ENCODE measurements at regions of chrX and their contacts with region 1.

Region 1: DNA sequence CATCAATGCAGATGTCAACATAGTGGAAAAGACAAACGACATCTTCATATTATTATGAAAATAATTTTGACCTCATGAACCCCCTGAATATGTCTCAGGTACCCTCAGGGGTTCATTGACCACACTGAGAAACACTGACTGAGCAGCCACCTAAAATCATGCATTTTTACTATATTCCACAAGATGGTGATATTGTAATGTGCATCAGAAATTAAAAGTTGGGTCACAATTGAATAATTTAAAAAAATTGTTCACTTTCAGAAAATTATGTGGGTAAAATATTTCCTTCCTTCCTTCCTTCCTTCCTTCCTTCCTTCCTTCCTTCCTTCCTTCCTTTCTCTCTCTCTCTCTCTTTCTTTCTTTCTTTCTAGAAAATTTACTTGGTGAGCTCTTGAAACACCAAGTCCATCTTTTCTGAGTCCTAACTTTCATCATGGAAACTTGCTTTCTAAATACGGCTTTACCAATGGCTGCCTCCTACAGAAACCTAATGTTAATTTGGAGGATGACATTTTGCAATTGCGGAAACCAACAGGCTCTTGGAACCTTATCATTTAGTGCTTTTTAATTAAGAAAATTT is 103.6 kb downstream of the RTL3 start:
- DNase-seq: no peak
- H3K4me3 Mint-ChIP-seq: no peak overlapping the region
- H3K27ac Mint-ChIP-seq: no peak overlapping the region
- H3K4me1 Mint-ChIP-seq: no peaks in the 10 kb centered on the region
- H3K27me3 Mint-ChIP-seq: no peaks in the 10 kb centered on the region
- CTCF ChIP-seq: no peak

Region 2: GRCh38 chrX:78708262-78708661 is 152.8 kb after region 1 on chrX:
- CTCF ChIA-PET with region 1: no interaction called
- intact Hi-C with region 1: loop called (anchors 1 kb)
- DNase-seq: peak; percentile 16
- H3K4me3 Mint-ChIP-seq: no peak overlapping the region
- H3K27ac Mint-ChIP-seq: no peak overlapping the region
- H3K4me1 Mint-ChIP-seq: no peaks in the 10 kb centered on the region
- H3K27me3 Mint-ChIP-seq: no peaks in the 10 kb centered on the region
- CTCF ChIP-seq: no peak

Region 3: GRCh38 chrX:78886550-78886949 is 331.1 kb after region 1 on chrX:
- CTCF ChIA-PET with region 1: no interaction called
- intact Hi-C with region 1: loop called (anchors 1 kb)
- DNase-seq: no peak
- H3K4me3 Mint-ChIP-seq: no peak overlapping the region
- H3K27ac Mint-ChIP-seq: no peak overlapping the region
- H3K4me1 Mint-ChIP-seq: no peaks in the 10 kb centered on the region
- H3K27me3 Mint-ChIP-seq: no peaks in the 10 kb centered on the region
- CTCF ChIP-seq: no peak

Region 4: GRCh38 chrX:79081895-79082512 is 526.5 kb after region 1 on chrX:
- CTCF ChIA-PET with region 1: no interaction called
- intact Hi-C with region 1: loop called (anchors 5 kb)
- DNase-seq: peak; percentile 21
- H3K4me3 Mint-ChIP-seq: no peak overlapping the region
- H3K27ac Mint-ChIP-seq: no peak overlapping the region
- H3K4me1 Mint-ChIP-seq: no peaks in the 10 kb centered on the region
- H3K27me3 Mint-ChIP-seq: no peaks in the 10 kb centered on the region
- CTCF ChIP-seq: peak; percentile 20

Region 5: DNA sequence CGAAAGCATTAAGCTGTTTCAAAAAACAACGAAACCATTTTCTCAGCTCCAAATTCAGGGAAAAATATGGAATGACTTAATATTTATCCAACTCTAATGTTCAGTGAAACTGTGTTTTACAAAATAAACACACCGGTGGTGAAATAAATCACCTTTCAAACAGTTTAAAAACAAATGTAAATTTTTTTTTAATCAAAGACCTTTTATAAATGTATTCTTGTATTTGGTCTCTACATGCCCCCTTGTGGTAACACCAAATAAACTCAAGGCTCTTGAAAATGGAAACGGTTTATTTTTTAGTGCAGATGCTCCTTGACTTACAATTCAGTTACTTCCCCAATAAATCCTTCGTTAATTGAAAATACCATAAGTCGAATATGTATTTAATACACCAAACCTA is 857.5 kb after region 1 on chrX:
- CTCF ChIA-PET with region 1: no interaction called
- intact Hi-C with region 1: loop called (anchors 10 kb)
- DNase-seq: no peak
- H3K4me3 Mint-ChIP-seq: peak overlapping the region; percentile 36
- H3K27ac Mint-ChIP-seq: peak overlapping the region; percentile 27
- H3K4me1 Mint-ChIP-seq: peaks cover 8% of the 10 kb centered on the region
- H3K27me3 Mint-ChIP-seq: no peaks in the 10 kb centered on the region
- CTCF ChIP-seq: peak; percentile 39

Region 6: DNA sequence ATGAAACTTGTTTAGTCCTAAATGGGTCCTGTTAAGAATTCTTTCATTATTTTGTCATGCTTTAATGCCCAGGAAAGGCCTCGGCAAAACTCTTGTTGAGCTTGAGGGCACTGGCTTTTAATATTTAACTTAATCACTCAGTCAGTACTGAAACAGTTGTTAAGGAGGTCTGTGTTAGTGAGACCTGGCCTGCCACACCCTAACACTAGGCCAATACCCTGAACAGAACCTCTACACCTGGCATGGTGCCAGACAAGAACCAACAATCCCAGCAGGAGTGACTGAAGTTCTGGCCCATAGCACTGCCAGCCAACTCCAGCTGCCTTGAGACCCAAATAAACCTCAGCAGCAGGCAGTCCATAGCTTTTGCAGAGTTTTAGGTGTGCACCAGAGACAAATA is 897.4 kb after region 1 on chrX:
- CTCF ChIA-PET with region 1: interaction called, 3 read pairs
- intact Hi-C with region 1: loop called (anchors 5 kb)
- DNase-seq: no peak
- H3K4me3 Mint-ChIP-seq: no peak overlapping the region
- H3K27ac Mint-ChIP-seq: no peak overlapping the region
- H3K4me1 Mint-ChIP-seq: no peaks in the 10 kb centered on the region
- H3K27me3 Mint-ChIP-seq: no peaks in the 10 kb centered on the region
- CTCF ChIP-seq: no peak